ENCODE measurements at regions of chr3 and their contacts with region 1.

Region 1: DNA sequence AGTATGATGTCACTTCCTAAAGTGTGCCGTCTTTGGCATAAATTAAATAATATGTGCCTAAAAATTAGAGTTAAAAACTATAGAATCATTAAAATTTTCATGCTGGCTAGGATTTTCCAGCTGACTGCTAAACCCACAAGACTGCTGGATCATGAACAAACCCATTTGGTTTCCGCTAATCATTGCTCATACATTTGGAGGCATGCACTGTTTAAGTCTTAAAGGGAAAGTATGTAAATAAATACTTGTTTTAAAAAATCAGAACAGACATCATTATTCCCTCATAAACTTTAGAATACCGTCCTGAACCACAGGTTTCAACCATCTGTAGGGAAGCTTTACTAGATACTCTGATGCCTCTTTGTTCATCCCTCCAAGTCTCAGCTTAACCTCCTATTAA is 26.5 kb downstream of the ATP6V1A start:
- DNase-seq: no peak
- ATAC-seq: no peak
- H3K4me3 ChIP-seq: no peak overlapping the region
- H3K27ac ChIP-seq: no peak overlapping the region
- H3K4me1 ChIP-seq: peaks cover 7 to 18% (median 14%) of the 10 kb centered on the region in 3 donors
- H3K27me3 ChIP-seq: no peaks in the 10 kb centered on the region
- CTCF ChIP-seq: no peak

Region 2: DNA sequence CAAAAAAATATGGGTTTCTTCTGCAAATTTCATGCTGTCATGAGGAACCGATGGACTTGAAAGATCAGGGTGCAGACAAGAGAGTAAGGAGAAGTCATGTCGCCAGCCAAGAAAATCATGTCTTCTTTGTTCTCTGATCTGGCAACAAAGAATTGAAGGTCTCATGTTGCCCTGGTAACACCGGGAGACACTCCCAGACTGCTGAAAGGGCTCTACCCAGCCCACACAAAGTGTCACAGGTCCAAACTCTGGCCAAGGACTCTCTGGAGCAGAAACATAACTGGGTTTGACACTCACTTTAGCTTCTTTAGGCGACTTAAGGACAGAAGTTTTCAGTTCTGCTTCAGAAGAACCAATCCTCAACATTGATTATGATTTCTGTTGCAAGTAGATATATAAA is 198.2 kb before region 1 on chr3:
- intact Hi-C with region 1: no loop called
- DNase-seq: no peak
- ATAC-seq: no peak
- H3K4me3 ChIP-seq: no peak overlapping the region
- H3K27ac ChIP-seq: no peak overlapping the region
- H3K4me1 ChIP-seq: no peaks in the 10 kb centered on the region
- H3K27me3 ChIP-seq: no peaks in the 10 kb centered on the region
- CTCF ChIP-seq: no peak

Region 3: DNA sequence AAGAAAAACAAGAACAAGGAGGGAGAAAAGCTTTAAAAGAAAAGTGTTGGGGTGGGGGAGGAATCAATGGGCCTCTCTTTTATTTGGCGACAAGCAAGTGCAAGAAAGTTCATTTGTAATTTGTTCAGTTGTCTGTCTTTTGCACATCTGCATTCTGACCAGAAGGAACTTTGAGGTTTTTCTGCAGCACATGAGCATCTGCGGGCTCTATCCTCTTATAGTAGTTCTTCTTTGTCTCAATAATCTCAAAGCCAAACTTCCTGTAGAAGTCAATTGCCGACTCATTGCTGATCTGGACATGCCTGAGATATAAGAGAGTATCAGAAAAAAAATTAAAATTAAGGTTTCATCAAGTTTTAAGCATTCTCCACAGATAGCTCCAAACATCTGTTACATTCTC is 51.7 kb before region 1 on chr3:
- intact Hi-C with region 1: no loop called
- DNase-seq: no peak
- ATAC-seq: no peak
- H3K4me3 ChIP-seq: no peak overlapping the region
- H3K27ac ChIP-seq: no peak overlapping the region
- H3K4me1 ChIP-seq: peaks cover 0 to 4% (median 0%) of the 10 kb centered on the region in 3 donors
- H3K27me3 ChIP-seq: no peaks in the 10 kb centered on the region
- CTCF ChIP-seq: no peak

Region 4: GRCh38 chr3:113825090-113825489 is 51.7 kb after region 1 on chr3:
- intact Hi-C with region 1: loop called in 1 of 3 experiments (anchors 10 kb)
- DNase-seq: no peak
- ATAC-seq: no peak
- H3K4me3 ChIP-seq: no peak overlapping the region
- H3K27ac ChIP-seq: no peak overlapping the region
- H3K4me1 ChIP-seq: peaks cover 0 to 2% (median 0%) of the 10 kb centered on the region in 3 donors
- H3K27me3 ChIP-seq: no peaks in the 10 kb centered on the region
- CTCF ChIP-seq: no peak

Measured in pancreas (tissue), 10 donors.